PC-9 (cell line): ENCODE measurements at regions of chr10 and their contacts with region 1.

Region 1: GRCh38 chr10:102917962-102918816 is at the start of gene CNNM2:
- DNase-seq: peak; percentile 95 to 96
- H3K4me3 ChIP-seq: peak within 1 kb of the TSS; percentile 96
- H3K27ac ChIP-seq: 0 out of 2 replicates have a peak within 1 kb of the TSS, but pooled peaks have one; percentile 41
- H3K4me1 ChIP-seq: peaks cover 36% of the 10 kb centered on the region
- H3K27me3 ChIP-seq: no peaks in the 10 kb centered on the region
- CTCF ChIP-seq: no peak
- total RNA-seq, gene CNNM2: 7.4 and 8.8 TPM in 2 replicates

Region 2: DNA sequence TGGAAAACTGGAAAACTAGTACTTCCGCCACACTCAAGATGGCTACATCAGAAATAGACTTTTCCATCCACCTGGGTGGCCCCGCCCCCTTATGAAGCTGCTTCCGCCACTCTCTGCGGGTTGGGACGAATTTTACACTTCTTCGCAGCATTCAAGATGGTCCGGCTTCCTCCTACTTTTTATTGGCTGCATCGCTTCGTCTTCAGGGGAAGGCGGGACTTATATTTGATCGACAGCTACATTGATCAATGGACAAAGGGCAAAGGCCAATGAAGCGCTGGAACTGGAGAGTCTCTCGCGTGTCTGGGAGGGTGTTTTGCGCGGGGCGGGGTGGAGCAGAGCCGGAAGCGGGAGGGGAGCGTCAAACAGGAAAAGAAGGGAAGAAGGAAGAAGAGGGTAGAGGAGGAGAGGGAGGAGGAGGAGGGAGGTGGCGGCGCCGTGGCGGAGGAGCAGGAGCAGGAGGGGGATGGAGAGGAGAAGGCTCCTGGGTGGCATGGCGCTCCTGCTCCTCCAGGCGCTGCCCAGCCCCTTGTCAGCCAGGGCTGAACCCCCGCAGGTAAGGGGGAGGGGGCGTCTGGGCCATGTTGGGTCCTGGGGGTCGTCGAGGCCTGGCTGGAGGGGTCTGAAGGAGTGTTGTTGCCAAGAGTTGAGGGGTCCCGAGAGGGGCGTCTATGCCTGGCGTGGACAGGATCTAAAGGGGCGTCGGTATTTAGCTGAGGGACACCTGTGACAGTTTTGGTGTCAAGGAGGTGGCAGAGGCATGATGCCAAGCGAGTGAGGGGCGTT is 174.4 kb before region 1 on chr10 and contains the start of gene WBP1L:
- CTCF ChIA-PET with region 1: no interaction called
- POLR2A ChIA-PET with region 1: interaction called, 8 read pairs
- intact Hi-C with region 1: loop called (anchors 2 kb)
- DNase-seq: peak; percentile 89 to 96
- H3K4me3 ChIP-seq: peak within 1 kb of the TSS; percentile 86
- H3K27ac ChIP-seq: no peak within 1 kb of the TSS
- H3K4me1 ChIP-seq: 0 out of 2 replicates have a peak, but pooled peaks cover 12% of the 10 kb centered on the region
- H3K27me3 ChIP-seq: no peaks in the 10 kb centered on the region
- CTCF ChIP-seq: no peak
- total RNA-seq, gene WBP1L: 16.2 and 19.7 TPM in 2 replicates

Region 3: DNA sequence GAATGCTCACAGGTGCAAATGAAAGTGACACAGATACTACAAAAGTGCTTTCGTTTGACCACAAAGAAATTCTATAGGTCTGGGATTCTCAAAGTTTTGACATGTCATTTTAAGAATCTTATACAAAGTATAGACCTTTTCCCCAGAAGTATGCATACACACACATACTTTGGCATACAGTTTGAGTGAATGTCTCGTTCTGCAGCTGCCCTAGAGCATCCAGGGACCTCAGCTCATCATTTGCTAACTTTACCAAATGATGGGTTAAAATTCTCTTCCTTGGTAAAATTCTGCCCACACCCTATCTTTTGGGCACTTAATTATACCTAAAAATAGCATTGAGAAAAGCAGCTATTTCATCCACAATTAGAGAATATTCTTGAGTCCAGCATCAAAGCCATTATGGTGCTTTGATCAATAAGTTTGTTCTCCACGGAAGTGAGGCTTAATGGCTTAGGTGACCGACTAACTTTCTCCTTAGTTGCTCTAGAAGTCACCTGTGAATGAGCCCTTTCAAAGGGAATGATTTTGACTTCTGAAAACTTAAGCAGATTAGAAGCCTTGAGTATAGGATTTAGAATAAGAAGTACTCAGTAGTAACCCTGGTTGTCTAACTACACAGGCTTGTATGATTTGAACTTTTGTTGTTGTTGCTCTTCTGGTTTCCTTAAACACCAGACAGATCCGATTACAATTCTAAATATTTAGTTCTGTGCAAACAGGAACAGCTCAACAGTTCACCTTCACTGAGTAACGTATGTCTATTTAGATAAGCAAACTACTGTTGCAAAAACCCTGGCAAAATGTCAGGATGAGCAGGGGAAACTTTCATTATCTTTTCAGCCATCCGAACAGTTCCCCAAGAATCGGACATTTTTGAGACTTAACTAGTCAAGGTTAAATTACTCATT is 70.5 kb after region 1 on chr10:
- CTCF ChIA-PET with region 1: no interaction called
- POLR2A ChIA-PET with region 1: no interaction called
- intact Hi-C with region 1: no loop called
- DNase-seq: peak; percentile 5 to 80
- H3K4me3 ChIP-seq: peak overlapping the region; percentile 24; the same call in 1 of the 2 replicates
- H3K27ac ChIP-seq: 0 out of 2 replicates have a peak overlapping the region, but pooled peaks have one; percentile 41
- H3K4me1 ChIP-seq: peaks cover 15% of the 10 kb centered on the region
- H3K27me3 ChIP-seq: no peaks in the 10 kb centered on the region
- CTCF ChIP-seq: no peak

Region 4: GRCh38 chr10:103025696-103026095 is 107.5 kb after region 1 on chr10:
- CTCF ChIA-PET with region 1: no interaction called
- POLR2A ChIA-PET with region 1: no interaction called
- intact Hi-C with region 1: no loop called
- DNase-seq: no peak
- H3K4me3 ChIP-seq: no peak overlapping the region
- H3K27ac ChIP-seq: no peak overlapping the region
- H3K4me1 ChIP-seq: no peaks in the 10 kb centered on the region
- H3K27me3 ChIP-seq: no peaks in the 10 kb centered on the region
- CTCF ChIP-seq: no peak

Region 5: GRCh38 chr10:103069453-103070331 is 151.5 kb after region 1 on chr10:
- CTCF ChIA-PET with region 1: interaction called, 4 read pairs
- POLR2A ChIA-PET with region 1: no interaction called
- intact Hi-C with region 1: loop called (anchors 1 kb)
- DNase-seq: peak; percentile 40 to 45
- H3K4me3 ChIP-seq: no peak overlapping the region
- H3K27ac ChIP-seq: no peak overlapping the region
- H3K4me1 ChIP-seq: no peaks in the 10 kb centered on the region; the same call in 1 of the 2 replicates
- H3K27me3 ChIP-seq: no peaks in the 10 kb centered on the region
- CTCF ChIP-seq: peak; percentile 71

Region 6: GRCh38 chr10:103238506-103239252 is 320.5 kb after region 1 on chr10:
- CTCF ChIA-PET with region 1: interaction called, 16 read pairs
- POLR2A ChIA-PET with region 1: no interaction called
- intact Hi-C with region 1: no loop called
- DNase-seq: peak; percentile 82 to 96
- H3K4me3 ChIP-seq: no peak overlapping the region
- H3K27ac ChIP-seq: peak overlapping the region; percentile 100
- H3K4me1 ChIP-seq: peaks cover 58% of the 10 kb centered on the region
- H3K27me3 ChIP-seq: no peaks in the 10 kb centered on the region
- CTCF ChIP-seq: peak; percentile 57; the same call in 1 of the 2 replicates

Region 7: GRCh38 chr10:103333925-103334520 is 415.8 kb after region 1 on chr10:
- CTCF ChIA-PET with region 1: no interaction called
- POLR2A ChIA-PET with region 1: no interaction called
- intact Hi-C with region 1: loop called (anchors 10 kb)
- DNase-seq: no peak
- H3K4me3 ChIP-seq: no peak overlapping the region
- H3K27ac ChIP-seq: no peak overlapping the region
- H3K4me1 ChIP-seq: no peaks in the 10 kb centered on the region
- H3K27me3 ChIP-seq: no peaks in the 10 kb centered on the region
- CTCF ChIP-seq: peak; percentile 71

Region 8: DNA sequence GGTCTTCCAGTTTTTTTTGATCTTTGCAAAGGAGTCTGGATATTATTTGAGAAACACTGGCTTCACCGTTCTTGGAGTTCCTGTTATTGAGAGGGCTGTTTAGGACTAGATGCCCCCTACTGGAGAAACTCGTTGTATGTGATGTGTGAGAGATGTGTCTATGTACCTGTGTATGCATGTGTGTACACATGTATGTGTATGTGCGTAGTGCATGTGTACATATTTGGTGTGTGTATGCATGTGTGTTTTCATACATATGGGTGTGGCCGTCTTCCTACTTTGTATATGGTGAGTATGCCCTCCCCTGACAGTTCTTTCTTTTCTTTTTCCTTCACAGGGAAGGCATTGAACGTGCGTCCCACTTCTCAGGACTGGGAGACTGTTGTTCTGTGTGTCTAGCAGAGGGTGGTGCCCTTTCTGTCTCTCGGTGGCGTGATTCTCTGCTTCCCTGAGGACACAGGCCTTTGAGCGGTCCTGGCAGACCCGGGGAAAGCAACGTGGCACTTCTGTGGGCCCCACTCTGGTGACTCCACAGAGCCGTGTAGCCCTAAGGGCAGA is 563.9 kb after region 1 on chr10:
- CTCF ChIA-PET with region 1: no interaction called
- POLR2A ChIA-PET with region 1: no interaction called
- intact Hi-C with region 1: loop called (anchors 5 kb)
- DNase-seq: peak in 1 of 2 experiments; percentile 20
- H3K4me3 ChIP-seq: no peak overlapping the region
- H3K27ac ChIP-seq: no peak overlapping the region
- H3K4me1 ChIP-seq: peaks cover 39% of the 10 kb centered on the region
- H3K27me3 ChIP-seq: no peaks in the 10 kb centered on the region
- CTCF ChIP-seq: peak; percentile 70